KBM-7 (cell line): ENCODE measurements at regions of chr6 and their contacts with region 1.

Region 1: DNA sequence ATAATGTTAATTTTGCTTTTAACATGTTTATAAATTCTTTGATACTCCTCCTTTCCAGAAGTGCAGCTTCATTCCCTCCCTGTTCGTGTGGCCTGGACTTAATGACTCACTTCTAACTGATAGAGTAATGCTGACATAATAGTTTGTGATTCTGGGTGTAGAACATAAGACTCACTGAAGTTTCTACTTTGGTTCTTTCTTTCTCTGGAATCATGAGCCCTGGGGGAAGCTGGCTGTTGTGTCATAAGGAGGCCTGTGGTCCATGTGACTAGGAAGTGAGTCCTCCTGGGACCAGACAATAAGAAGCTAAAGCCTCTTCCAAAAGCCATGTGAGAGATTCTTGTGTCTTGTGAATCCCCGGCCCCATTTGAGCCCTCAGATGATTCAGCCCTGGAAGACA is 30.5 kb upstream of the HLA-G start:
- DNase-seq: no peak

Region 2: DNA sequence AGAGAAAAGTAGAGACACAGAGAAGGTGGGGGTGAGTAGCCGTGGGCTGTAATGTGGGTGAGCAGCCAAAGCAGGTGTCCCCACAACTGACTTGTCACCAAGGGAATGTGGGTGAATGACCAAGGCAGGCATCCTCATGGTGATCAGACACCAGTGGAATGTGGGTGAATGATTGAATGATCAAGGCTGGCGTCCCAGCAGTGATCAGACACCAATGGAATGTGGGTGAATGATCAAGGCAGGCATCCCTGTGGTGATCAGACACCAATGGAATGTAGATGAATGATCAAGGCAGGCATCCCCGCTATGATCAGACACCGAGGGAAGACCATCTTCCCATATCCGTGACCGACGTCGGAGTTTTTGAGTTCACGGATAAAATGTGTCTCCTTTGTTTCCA is 545.4 kb before region 1 on chr6:
- in situ Hi-C with region 1: no loop called
- DNase-seq: no peak

Region 3: GRCh38 chr6:29953001-29953441 is 155.9 kb after region 1 on chr6:
- in situ Hi-C with region 1: loop called (anchors 5 kb)
- DNase-seq: no peak